Activated CD8-positive, alpha-beta memory T cell treated with anti-CD3 and anti-CD28 coated beads, Interleukin-2, amount 10 ng/mL, durations not matched to agents 7 days and 5 days (primary cell): ENCODE measurements at regions of chr2 and their contacts with region 1.

Region 1: GRCh38 chr2:112259509-112260294 is 4.9 kb upstream of the ZC3H8 start:
- DNase-seq: peak; percentile 90
- ATAC-seq: peak; percentile 52
- H3K4me3 Mint-ChIP-seq: peak overlapping the region; percentile 48
- H3K27ac Mint-ChIP-seq: peak overlapping the region; percentile 80
- H3K4me1 Mint-ChIP-seq: peaks cover 20% of the 10 kb centered on the region
- H3K27me3 Mint-ChIP-seq: no peaks in the 10 kb centered on the region

Region 2: DNA sequence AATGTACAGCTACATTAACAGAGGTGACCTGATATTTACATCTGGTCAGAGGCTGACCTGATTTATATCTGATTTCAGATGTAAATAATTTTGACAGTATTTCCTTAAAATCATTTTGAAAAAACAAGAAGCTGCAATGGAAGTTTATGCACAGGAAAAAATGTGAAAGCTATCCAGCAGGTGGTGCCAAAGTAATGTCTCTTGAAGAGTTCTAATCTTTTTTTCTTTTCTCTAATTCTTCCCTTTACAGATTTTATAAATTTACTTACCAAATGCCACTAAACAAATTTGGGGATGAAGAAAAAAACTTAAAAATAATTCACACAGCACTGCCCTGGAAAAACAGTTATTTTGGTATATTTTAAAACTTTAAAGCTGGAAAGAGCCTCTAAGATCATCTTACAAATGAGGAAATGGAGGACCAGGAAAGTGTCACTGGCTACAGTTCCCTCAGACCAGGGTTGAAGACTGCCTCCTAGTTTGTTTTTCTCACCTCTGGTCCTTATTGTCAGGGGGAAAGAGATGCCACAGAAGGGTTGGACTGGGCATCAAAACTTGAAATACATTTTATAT is 137.9 kb before region 1 on chr2:
- CTCF ChIA-PET with region 1: interaction called, 13 read pairs
- DNase-seq: peak; percentile 56
- ATAC-seq: no peak
- H3K4me3 Mint-ChIP-seq: no peak overlapping the region
- H3K27ac Mint-ChIP-seq: no peak overlapping the region
- H3K4me1 Mint-ChIP-seq: no peaks in the 10 kb centered on the region
- H3K27me3 Mint-ChIP-seq: no peaks in the 10 kb centered on the region

Region 3: DNA sequence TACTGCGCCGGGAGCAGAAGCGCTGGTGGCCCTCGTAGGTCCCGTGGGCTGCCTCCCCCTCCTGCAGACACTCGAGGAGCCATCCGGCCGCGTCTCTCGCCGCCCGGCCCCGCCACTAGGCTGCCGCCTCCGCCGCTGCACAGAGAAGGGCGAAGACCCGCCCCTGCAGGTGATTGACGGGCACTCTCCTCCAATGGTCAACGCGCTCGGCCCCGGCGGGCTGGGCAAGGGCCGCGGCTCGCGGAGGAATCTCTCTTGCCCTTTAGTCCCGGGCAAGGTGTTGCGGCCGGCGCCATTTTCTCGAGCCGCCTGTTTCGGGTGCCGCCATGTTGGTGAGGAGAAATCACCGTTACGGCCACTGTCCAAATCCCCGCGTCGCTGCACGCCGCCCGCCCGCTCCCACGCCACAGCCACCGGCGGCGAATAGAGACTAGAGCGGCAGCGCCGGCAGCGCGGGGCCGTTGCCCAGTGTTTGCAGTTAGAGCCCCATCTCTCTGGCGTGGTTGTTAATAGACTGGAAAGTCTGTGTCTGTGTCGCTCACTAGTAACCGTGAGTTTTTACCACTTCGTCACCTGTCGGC is 15.7 kb after region 1 on chr2 and contains the start of gene ZC3H6:
- CTCF ChIA-PET with region 1: interaction called, 19 read pairs
- DNase-seq: peak; percentile 99
- ATAC-seq: peak; percentile 96
- H3K4me3 Mint-ChIP-seq: peak within 1 kb of the TSS; percentile 89
- H3K27ac Mint-ChIP-seq: peak within 1 kb of the TSS; percentile 97
- H3K4me1 Mint-ChIP-seq: peaks cover 6% of the 10 kb centered on the region
- H3K27me3 Mint-ChIP-seq: no peaks in the 10 kb centered on the region
- total RNA-seq, gene ZC3H6: 6.9 to 12.1 TPM